Dorsolateral prefrontal cortex (tissue), 120 donors: ENCODE measurements at regions of chr16 and their contacts with region 1.

Region 1: DNA sequence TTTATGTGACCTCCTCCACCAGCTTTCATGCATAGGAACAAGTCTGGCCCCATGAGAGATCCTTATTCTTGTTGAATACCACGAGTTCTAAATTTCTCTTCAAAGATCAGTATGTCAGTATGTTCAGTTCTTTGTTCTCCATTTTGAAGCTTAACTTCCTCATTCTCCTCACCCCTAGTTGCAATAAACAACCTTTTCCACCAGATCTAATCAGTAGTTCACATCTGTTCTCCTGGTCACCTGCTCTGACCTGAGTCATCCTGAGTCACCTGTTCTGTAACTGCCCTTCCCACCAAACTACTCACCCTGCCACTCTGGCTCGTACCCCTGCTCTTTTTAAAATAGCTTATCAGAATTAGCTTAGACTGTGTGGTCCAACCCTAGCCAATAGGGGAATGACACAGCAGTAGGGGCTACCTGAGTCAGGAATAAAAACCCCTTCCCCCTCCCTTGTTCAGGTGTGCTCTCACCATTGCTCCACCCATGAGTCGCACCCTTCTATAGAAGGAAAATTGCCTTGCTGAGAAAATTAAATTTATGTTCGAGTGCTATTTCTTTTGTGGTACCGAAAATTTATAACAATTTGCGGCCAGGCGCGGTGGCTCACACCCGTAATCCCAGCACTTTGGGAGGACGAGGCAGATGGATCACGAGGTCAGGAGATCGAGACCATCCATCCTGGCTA is 94.6 kb downstream of the EMP2 start:
- DNase-seq: no peak
- H3K4me3 ChIP-seq: no peak overlapping the region
- H3K27ac ChIP-seq: no peak overlapping the region
- H3K27me3 ChIP-seq: no peaks in the 10 kb centered on the region
- CTCF ChIP-seq: no peak

Region 2: GRCh38 chr16:10368969-10369551 is 116.8 kb before region 1 on chr16:
- intact Hi-C with region 1: no loop called
- DNase-seq: no peak
- H3K4me3 ChIP-seq: no peak overlapping the region
- H3K27ac ChIP-seq: no peak overlapping the region
- H3K27me3 ChIP-seq: no peaks in the 10 kb centered on the region
- CTCF ChIP-seq: no peak

Region 3: DNA sequence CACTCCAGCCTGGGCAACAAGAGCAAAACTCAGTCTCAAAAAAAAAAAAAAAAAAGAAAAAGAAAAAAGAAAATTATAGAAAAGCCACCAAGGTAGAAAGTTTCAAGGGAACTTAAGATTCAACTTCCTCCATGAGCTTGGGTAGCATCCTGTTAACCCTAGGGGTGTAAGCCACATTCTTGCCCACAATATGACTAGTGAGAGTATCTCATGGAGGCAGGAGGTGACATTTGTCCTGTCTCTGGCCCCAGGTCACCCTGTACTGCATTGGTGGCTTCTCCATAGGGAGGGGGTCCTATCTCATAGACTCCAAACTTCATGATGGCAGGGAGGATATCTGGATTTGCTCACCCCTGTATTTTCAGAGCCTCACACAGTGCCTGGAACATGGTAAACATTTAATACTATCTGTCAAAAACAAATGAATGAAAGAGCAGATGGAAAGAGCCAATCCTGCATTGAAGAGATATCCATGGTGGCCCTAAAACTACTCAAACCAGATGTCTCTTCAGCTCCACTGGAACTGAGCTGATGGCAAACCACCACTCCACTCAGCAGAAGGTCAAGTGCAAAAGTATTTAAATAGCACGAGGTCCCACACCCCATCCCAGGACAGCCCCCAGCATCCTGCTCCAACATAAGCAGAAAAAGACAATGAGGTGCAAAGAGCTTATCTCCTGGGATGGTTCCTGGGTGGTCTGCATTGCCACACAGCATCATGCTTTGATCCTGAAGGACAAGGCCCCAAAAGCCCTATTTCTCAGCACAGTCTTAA is 44.2 kb after region 1 on chr16:
- intact Hi-C with region 1: no loop called
- DNase-seq: no peak
- H3K4me3 ChIP-seq: no peak overlapping the region
- H3K27ac ChIP-seq: no peak overlapping the region
- H3K27me3 ChIP-seq: no peaks in the 10 kb centered on the region
- CTCF ChIP-seq: no peak

Region 4: GRCh38 chr16:10541366-10541765 is 55.5 kb after region 1 on chr16:
- intact Hi-C with region 1: loop called in 1 of 2 experiments (anchors 10 kb)
- DNase-seq: peak in 1 of 10 donors; percentile 3
- H3K4me3 ChIP-seq: no peak overlapping the region
- H3K27ac ChIP-seq: no peak overlapping the region
- H3K27me3 ChIP-seq: no peaks in the 10 kb centered on the region
- CTCF ChIP-seq: no peak